Ascending aorta (tissue), 2 donors: ENCODE measurements at regions of chr14 and their contacts with region 1.

Region 1: GRCh38 chr14:72812292-72812911 is 81.5 kb downstream of the DPF3 start:
- DNase-seq: peak; percentile 68 to 87
- H3K4me3 ChIP-seq: peak overlapping the region in 1 of 2 donors; percentile 35
- H3K27ac ChIP-seq: peak overlapping the region; percentile 87 to 89
- H3K4me1 ChIP-seq: peaks cover 8 to 13% of the 10 kb centered on the region in 2 donors
- H3K27me3 ChIP-seq: no peaks in the 10 kb centered on the region
- CTCF ChIP-seq: peak in 1 of 3 experiments; percentile 18

Region 2: DNA sequence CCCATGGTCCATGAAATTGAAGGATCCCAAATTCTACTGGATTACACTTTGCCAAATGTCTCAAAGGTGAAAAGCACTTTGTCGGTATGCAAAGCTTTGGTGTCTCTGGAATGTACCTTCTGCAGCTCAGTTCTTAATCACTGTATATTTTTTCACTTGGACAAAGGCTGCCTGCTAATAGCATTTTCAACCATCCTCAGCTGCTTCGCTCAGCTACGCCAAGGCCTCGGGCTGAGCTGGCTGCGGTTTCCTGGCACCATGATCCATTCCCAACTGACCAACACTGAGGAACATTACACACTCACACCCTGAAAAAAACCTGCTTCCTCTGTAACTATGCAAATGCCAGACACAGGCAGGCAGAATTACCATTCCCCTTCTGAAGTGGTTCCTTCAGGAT is 253.7 kb before region 1 on chr14:
- intact Hi-C with region 1: loop called (anchors 10 kb)
- DNase-seq: no peak
- H3K4me3 ChIP-seq: no peak overlapping the region
- H3K27ac ChIP-seq: peak overlapping the region; percentile 55 to 75
- H3K4me1 ChIP-seq: peaks cover 3 to 23% of the 10 kb centered on the region in 2 donors
- H3K27me3 ChIP-seq: no peaks in the 10 kb centered on the region
- CTCF ChIP-seq: no peak

Region 3: GRCh38 chr14:72714094-72714493 is 98.3 kb before region 1 on chr14:
- intact Hi-C with region 1: loop called (anchors 5 kb)
- DNase-seq: no peak
- H3K4me3 ChIP-seq: no peak overlapping the region
- H3K27ac ChIP-seq: peak overlapping the region in 1 of 2 donors; percentile 72
- H3K4me1 ChIP-seq: peaks cover 19 to 31% of the 10 kb centered on the region in 2 donors
- H3K27me3 ChIP-seq: no peaks in the 10 kb centered on the region
- CTCF ChIP-seq: no peak

Region 4: DNA sequence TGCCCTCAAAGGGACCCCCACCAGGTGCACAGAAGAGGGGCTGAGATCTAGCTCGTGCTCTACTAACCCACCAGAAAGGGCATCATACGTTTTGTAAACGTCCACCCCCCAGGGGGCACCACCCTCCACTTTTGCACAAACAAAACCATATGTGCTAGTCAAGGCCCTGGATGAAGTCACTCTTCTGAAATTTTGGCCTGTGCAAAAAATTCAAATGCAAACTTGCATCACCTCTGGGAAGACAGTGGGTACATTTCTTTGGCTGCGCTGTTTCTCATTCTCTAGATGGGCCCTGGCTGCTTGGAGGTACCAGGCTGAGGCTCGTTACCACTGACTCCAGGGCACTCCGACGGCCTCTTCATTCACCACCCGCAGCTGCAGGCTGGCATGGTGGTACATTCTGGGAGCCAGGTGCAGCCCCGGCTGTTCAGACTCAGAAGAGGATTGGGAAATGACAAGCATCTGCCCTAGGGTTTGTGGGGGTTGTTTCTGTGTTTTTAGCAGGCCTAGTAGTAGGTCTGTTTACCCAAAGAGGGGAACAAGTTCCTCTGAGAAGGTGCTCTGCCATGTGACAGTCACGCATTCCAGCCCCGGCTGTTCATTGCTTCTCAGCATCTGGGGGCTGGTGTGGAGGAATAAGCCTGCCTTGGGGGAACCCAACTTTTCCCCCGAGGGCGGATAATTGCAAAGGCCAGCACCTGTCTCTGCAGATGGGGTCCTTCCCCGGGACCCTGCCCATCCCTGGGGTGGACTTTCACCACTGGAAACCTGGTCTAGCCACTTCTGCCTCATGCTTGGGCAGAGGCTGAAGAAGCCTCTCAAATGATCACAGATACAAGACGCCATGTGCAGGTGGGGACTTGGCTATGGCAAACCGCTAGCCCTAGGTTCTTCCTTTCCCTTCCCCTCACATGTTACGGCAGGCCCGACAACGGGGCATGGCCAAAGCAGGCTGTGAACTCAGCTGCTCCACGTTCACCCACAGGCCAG is 66.1 kb before region 1 on chr14:
- intact Hi-C with region 1: loop called (anchors 2 kb)
- DNase-seq: no peak
- H3K4me3 ChIP-seq: no peak overlapping the region
- H3K27ac ChIP-seq: peak overlapping the region; percentile 65 to 72
- H3K4me1 ChIP-seq: peaks cover 0 to 8% of the 10 kb centered on the region in 2 donors
- H3K27me3 ChIP-seq: no peaks in the 10 kb centered on the region
- CTCF ChIP-seq: peak in 2 of 3 experiments; percentile 20 to 23

Region 5: GRCh38 chr14:72893636-72894321 is 81.4 kb after region 1 on chr14 and contains the start of gene DPF3:
- intact Hi-C with region 1: loop called (anchors 1 kb)
- DNase-seq: peak; percentile 92 to 97
- H3K4me3 ChIP-seq: peak within 1 kb of the TSS; percentile 78 to 92
- H3K27ac ChIP-seq: peak within 1 kb of the TSS in 1 of 2 donors; percentile 37
- H3K4me1 ChIP-seq: peaks cover 6% of the 10 kb centered on the region in 2 donors
- H3K27me3 ChIP-seq: peaks cover 3% of the 10 kb centered on the region
- CTCF ChIP-seq: no peak
- total RNA-seq, gene DPF3: 0.11 TPM